AG04450 (cell line): ENCODE measurements at regions of chr12 and their contacts with region 1.

Region 1: DNA sequence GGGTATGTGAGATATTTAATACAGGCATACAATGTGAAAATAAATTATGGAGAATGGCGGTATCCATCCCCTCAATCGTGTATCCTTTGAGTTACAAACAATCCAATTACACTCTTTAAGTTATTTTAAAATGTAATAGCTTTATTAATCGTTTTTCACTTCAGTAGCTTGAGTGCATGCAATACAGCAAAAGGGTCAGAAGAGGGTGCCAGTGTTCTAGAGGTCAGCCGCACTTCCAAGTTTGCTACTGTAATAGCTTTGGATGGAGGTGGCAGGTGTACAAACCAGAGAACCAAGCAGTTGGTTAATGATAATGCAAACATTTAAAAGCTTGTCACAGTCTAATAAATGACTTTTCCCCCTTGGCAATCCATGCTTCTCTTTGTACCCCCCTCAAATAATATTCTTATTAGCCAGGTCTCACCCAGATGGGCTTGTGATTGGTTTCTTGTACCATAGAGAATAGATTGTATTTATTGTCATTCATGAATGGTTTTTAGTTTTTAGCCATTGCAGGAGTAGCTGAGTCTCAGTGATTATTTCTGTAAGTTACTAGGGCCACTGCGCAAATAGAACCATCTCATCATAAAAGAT is 127.0 kb downstream of the ERC1 start:
- DNase-seq: peak; percentile 63
- H3K4me3 ChIP-seq: no peak overlapping the region
- H3K27ac ChIP-seq: no peak overlapping the region
- H3K27me3 ChIP-seq: no peaks in the 10 kb centered on the region
- CTCF ChIP-seq: peak; percentile 93

Region 2: DNA sequence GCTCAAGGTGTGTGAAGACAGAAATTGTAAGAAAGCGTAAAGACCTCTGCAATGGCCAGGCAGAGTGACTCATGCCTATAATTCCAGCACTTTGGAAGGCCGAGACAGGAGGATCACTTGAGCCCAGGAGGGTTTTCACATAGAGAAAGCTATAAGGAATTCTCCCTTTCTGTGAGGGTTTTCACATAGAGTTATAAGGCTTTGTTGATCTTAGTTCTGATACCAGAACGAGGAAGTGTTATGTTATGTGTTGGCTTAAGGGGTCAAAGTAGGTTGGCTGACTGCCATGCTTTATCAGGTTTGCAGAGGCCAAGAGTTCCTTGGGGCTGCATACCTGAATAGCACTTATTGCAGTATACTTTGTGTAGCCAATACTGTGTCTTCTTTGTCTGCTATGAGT is 12.1 kb after region 1 on chr12:
- CTCF ChIA-PET with region 1: interaction called, 24 read pairs
- POLR2A ChIA-PET with region 1: no interaction called
- DNase-seq: no peak
- H3K4me3 ChIP-seq: no peak overlapping the region
- H3K27ac ChIP-seq: no peak overlapping the region
- H3K27me3 ChIP-seq: no peaks in the 10 kb centered on the region
- CTCF ChIP-seq: no peak

Region 3: GRCh38 chr12:1184402-1184801 is 66.3 kb after region 1 on chr12:
- CTCF ChIA-PET with region 1: interaction called, 20 read pairs
- POLR2A ChIA-PET with region 1: no interaction called
- DNase-seq: no peak
- H3K4me3 ChIP-seq: no peak overlapping the region
- H3K27ac ChIP-seq: no peak overlapping the region
- H3K27me3 ChIP-seq: no peaks in the 10 kb centered on the region
- CTCF ChIP-seq: no peak

Region 4: DNA sequence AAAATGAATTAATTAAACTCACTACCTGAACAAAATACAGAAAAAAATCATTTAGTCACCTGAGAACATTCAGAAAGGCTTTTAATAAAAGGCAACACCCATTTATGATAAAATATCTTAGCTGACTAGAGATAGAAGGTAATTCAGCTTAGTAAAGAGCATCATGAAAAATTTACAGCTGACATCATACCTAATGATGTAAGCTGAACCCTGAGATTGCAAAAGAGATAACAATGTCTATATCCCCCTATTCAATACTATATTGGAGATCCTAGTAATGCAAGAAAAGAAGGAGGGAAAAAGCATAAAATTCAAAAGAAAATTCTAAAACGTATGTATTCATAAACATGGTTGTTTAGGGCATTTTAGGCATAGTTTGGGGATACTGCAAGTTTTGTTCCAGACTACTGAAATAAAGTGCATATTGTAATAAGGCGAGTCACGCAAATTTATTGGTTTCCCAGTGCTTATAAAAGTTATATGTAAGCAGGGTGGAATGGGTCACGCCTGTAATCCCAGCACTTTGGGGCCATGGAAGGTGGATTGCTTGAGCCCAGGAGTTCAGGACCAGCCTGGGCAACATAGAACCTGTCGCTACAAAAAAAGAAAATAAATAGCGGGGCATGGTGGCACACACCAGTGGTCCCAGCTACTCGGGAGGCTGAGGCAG is 184.3 kb after region 1 on chr12:
- CTCF ChIA-PET with region 1: interaction called, 10 read pairs
- POLR2A ChIA-PET with region 1: no interaction called
- DNase-seq: no peak
- H3K4me3 ChIP-seq: no peak overlapping the region
- H3K27ac ChIP-seq: no peak overlapping the region
- H3K27me3 ChIP-seq: no peaks in the 10 kb centered on the region
- CTCF ChIP-seq: no peak

Region 5: DNA sequence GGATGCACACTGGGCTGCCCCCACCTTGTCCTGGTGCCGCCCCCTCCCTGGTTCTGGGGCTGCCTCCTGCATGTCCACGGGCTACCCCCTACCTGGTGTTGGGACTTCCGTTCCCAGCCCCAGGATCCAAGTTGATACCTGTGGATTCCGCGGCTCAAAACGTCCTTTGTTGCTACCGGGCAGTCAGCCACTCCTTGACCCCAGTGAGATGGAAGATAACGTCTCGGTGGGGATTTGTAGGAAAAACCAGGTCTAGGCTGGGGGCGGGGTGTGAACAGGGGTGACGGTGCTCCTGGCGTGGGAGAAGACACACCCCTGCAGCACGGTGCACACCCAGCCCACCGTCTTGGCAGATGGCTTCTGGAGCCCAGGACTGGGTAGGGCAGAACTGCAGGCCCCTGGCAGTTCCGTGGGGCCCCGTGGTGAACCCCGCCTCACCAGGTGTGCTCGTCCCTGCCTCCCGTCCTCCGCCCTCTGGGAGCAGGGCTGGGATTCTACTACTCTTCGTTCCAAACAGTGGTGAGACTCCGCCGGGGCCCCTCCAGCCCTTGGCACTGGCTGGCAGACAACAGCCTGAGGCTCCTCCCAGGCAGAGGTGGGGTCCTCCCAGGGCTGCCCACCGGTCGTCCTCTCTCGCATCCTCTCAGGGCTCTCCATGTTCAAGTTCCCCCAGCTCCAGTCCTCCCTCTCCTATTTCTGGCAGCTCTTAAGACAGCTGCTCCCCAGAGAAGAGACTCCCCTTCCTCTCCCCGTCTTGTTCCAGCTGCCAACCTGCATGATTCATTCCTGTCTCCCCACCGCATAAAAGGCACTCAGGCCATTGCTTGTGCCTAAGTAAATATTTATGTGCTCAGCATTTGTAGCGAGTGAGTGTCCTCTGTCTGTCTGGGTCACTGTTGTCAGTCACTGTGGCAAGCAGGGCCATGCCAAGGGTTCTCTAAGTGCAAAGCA is 400.8 kb after region 1 on chr12:
- CTCF ChIA-PET with region 1: interaction called, 12 read pairs
- POLR2A ChIA-PET with region 1: no interaction called
- DNase-seq: peak; percentile 49
- H3K4me3 ChIP-seq: no peak overlapping the region
- H3K27ac ChIP-seq: no peak overlapping the region
- H3K27me3 ChIP-seq: no peaks in the 10 kb centered on the region
- CTCF ChIP-seq: no peak

Region 6: GRCh38 chr12:1594261-1595025 is 476.4 kb after region 1 on chr12 and contains the start of gene FBXL14:
- CTCF ChIA-PET with region 1: interaction called, 65 read pairs
- POLR2A ChIA-PET with region 1: no interaction called
- DNase-seq: no peak
- H3K4me3 ChIP-seq: peak within 1 kb of the TSS; percentile 74
- H3K27ac ChIP-seq: peak within 1 kb of the TSS; percentile 79
- H3K27me3 ChIP-seq: no peaks in the 10 kb centered on the region
- CTCF ChIP-seq: no peak
- polyA plus RNA-seq, gene FBXL14: 3.2 and 4.8 TPM in 2 replicates

Region 7: DNA sequence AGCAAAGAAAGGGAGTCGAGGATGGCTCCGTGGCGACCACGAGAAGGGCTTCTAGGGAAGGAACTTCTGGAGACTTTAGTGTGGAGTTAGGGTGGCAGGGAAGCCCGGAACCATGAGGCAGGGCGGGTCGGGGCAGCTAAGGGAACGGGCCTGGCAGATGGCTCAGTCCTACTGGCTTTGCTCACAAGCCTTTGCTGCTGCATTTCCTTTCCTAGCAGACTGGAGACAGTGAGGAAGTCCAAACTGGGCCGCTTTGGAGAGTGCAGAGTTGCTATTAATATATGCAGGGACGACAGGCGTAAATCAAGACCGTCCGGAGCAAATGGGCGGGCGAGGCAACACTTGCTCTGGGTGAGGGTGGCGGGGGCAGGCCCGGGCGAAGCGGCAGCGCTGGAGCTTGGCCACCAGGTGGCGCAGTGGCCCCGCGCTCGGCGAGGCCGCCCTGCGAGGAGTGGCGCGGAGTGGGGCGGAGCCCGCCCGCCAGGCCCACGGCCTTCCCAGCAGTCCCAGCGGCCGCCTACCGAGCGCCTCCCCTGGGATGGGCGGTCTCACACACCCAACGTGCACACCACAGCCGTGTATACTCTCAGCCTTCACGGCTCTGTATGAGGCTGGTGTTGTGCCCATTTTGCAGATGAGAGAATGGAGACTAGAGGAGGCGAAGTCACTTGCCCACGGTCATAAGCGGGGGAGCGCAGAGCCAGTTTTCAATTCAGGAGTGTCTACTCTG is 677.9 kb after region 1 on chr12:
- CTCF ChIA-PET with region 1: interaction called, 11 read pairs
- POLR2A ChIA-PET with region 1: no interaction called
- DNase-seq: peak; percentile 71
- H3K4me3 ChIP-seq: peak overlapping the region; percentile 46
- H3K27ac ChIP-seq: no peak overlapping the region
- H3K27me3 ChIP-seq: peaks cover 3% of the 10 kb centered on the region
- CTCF ChIP-seq: peak; percentile 73